ENCODE measurements at regions of chr12 and their contacts with region 1.

Region 1: DNA sequence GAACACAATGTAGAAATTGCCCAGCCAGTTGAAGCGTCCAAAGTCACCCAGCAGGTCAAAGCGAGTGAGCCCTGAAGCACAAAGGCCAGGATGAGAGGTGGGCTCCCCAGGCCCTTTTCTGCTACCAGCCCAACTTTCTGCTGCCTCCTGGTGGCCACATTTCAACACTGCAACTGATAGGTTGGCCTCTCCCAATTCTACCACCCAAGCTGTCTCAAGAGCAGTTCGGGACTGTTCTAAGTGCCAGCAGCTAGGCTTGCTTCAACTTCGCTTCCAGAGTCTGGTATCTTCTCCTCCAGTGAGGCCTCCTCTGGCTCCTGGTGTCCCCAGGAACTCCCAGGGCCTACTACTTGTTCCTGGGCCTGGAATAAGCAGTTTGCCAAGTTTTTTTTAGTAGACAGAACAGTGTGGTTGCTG is 3.4 kb upstream of the DHH start:
- DNase-seq: peak; percentile 78
- H3K4me3 ChIP-seq: no peak overlapping the region; a peak in 1 of 4 replicates
- H3K27ac ChIP-seq: no peak overlapping the region
- H3K4me1 ChIP-seq: peaks cover 0 to 13% of the 10 kb centered on the region in 2 experiments; a peak in 1 of 4 replicates
- H3K27me3 ChIP-seq: peaks cover 12% of the 10 kb centered on the region; the same call in 1 of the 2 replicates
- CTCF ChIP-seq: peak; percentile 79
- EP300 ChIP-seq: no peak
- RAD21 ChIP-seq: peak; percentile 57

Region 2: DNA sequence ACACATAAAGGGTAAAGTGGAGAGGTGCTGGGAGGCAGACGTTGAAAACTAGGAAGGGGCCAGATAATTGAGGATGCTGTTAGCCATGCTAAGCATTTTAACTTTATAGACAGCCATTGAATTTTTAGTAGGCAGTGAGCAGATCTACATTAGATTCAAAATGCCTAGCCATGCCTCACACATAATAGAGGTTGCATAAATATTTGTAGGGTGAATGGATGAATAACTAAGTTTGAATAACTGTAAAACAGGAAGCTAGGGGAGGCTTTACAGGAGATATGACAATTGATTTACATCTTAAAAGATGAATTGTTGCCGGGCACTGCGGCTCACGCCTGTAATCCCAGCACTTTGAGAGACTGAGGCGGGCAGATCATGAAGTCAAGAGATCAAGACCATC is 369.2 kb before region 1 on chr12:
- CTCF ChIA-PET with region 1: no interaction called
- POLR2A ChIA-PET with region 1: no interaction called
- DNase-seq: no peak
- H3K4me3 ChIP-seq: no peak overlapping the region
- H3K27ac ChIP-seq: no peak overlapping the region
- H3K4me1 ChIP-seq: no peaks in the 10 kb centered on the region
- H3K27me3 ChIP-seq: no peaks in the 10 kb centered on the region
- CTCF ChIP-seq: no peak
- EP300 ChIP-seq: no peak
- RAD21 ChIP-seq: no peak

Region 3: GRCh38 chr12:49043856-49044258 is 54.2 kb before region 1 on chr12:
- CTCF ChIA-PET with region 1: interaction called, 11 read pairs
- POLR2A ChIA-PET with region 1: no interaction called
- DNase-seq: peak; percentile 80
- H3K4me3 ChIP-seq: no peak overlapping the region
- H3K27ac ChIP-seq: no peak overlapping the region
- H3K4me1 ChIP-seq: no peaks in the 10 kb centered on the region
- H3K27me3 ChIP-seq: no peaks in the 10 kb centered on the region
- CTCF ChIP-seq: peak; percentile 67
- EP300 ChIP-seq: no peak
- RAD21 ChIP-seq: no peak

Region 4: GRCh38 chr12:49069507-49070346 is 28.3 kb before region 1 on chr12 and contains the start of gene RHEBL1:
- CTCF ChIA-PET with region 1: interaction called, 300 read pairs
- POLR2A ChIA-PET with region 1: interaction called, 4 read pairs
- DNase-seq: peak; percentile 97
- H3K4me3 ChIP-seq: peak within 1 kb of the TSS; percentile 70 to 99
- H3K27ac ChIP-seq: peak within 1 kb of the TSS; percentile 60 to 67
- H3K4me1 ChIP-seq: peaks cover 3 to 5% of the 10 kb centered on the region in 2 experiments; a peak in 1 of 4 replicates
- H3K27me3 ChIP-seq: no peaks in the 10 kb centered on the region
- CTCF ChIP-seq: peak; percentile 28; the same call in 1 of the 2 replicates
- EP300 ChIP-seq: no peak
- RAD21 ChIP-seq: no peak
- polyA plus RNA-seq, gene RHEBL1: 2.2 and 2.3 TPM in 2 replicates

Region 5: GRCh38 chr12:49110464-49111155 is 12.6 kb after region 1 on chr12 and contains the start of gene LMBR1L:
- CTCF ChIA-PET with region 1: interaction called, 147 read pairs
- POLR2A ChIA-PET with region 1: interaction called, 9 read pairs
- DNase-seq: peak; percentile 97
- H3K4me3 ChIP-seq: peak within 1 kb of the TSS; percentile 82 to 100
- H3K27ac ChIP-seq: peak within 1 kb of the TSS; percentile 85 to 88
- H3K4me1 ChIP-seq: peaks cover 0 to 12% of the 10 kb centered on the region in 2 experiments; a peak in 1 of 4 replicates
- H3K27me3 ChIP-seq: no peaks in the 10 kb centered on the region
- CTCF ChIP-seq: peak; percentile 46
- EP300 ChIP-seq: no peak
- RAD21 ChIP-seq: peak; percentile 12; the same call in 1 of the 2 replicates
- polyA plus RNA-seq, gene LMBR1L: 43.0 and 61.4 TPM in 2 replicates

Region 6: DNA sequence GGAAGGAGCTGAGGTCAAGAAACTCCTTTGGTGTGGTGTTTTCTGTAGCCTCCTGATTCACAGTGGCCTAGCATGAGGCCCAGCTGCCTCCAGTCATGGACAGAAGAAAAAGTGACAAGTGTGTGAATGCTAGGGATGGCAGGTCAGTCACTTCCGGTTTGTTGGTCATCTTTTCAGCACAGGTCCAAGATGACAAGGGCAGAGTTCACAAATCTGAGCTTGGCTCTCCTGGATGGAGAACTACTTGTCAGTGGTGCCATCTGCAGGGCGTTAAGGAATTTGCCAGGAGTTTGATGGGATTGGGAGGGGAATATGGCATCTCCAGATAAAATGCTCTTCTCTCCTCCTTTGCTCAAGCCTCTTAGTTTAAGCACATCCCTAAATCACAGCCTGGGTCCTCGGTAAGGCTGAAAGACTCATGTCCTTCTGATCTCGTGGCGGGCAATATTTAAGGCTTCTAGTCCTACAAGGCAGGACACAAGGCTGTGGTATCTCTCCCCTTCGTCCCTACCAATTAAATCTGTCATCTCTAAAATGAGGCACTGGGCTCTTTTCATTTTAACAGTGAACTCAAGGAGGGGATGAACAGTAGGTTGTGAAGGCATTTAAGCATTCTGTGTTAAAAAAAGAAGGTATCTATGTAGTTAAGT is 23.1 kb after region 1 on chr12:
- CTCF ChIA-PET with region 1: interaction called, 147 read pairs
- POLR2A ChIA-PET with region 1: no interaction called
- DNase-seq: peak; percentile 77
- H3K4me3 ChIP-seq: no peak overlapping the region; a peak in 1 of 4 replicates
- H3K27ac ChIP-seq: no peak overlapping the region
- H3K4me1 ChIP-seq: no peaks in the 10 kb centered on the region; a peak in 1 of 4 replicates
- H3K27me3 ChIP-seq: no peaks in the 10 kb centered on the region
- CTCF ChIP-seq: peak; percentile 72
- EP300 ChIP-seq: no peak
- RAD21 ChIP-seq: peak; percentile 85

Region 7: GRCh38 chr12:49232940-49233841 is 135.1 kb after region 1 on chr12:
- CTCF ChIA-PET with region 1: interaction called, 12 read pairs
- POLR2A ChIA-PET with region 1: no interaction called
- DNase-seq: peak; percentile 64
- H3K4me3 ChIP-seq: peak overlapping the region in 1 of 2 experiments; percentile 41; a peak in 2 of 4 replicates
- H3K27ac ChIP-seq: peak overlapping the region; percentile 79 to 90
- H3K4me1 ChIP-seq: peaks cover 23 to 25% of the 10 kb centered on the region in 2 experiments
- H3K27me3 ChIP-seq: no peaks in the 10 kb centered on the region
- CTCF ChIP-seq: peak; percentile 41
- EP300 ChIP-seq: peak in 1 of 2 experiments; percentile 44; a peak in 1 of 4 replicates
- RAD21 ChIP-seq: no peak

Region 8: DNA sequence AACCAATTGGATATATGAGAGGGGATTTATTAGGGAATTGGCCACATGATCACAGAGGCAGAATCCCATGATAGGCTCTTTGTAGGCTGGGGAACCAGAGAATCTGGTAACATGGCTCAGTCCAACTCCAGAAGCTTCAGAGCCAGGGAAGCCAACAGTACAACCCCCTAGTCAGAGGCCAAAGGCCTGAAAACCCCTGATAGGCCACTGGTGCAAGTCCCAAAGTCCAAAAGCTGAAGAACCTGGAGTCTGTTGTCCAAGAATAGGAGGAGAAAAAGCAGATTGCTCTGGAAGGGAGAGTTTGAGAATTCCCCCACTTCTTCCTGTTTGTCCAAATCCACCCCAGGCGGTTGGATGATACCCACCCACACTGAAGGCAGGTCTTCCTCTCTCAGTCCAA is 216.8 kb after region 1 on chr12:
- CTCF ChIA-PET with region 1: no interaction called
- POLR2A ChIA-PET with region 1: no interaction called
- DNase-seq: no peak
- H3K4me3 ChIP-seq: no peak overlapping the region
- H3K27ac ChIP-seq: no peak overlapping the region
- H3K4me1 ChIP-seq: no peaks in the 10 kb centered on the region
- H3K27me3 ChIP-seq: no peaks in the 10 kb centered on the region
- CTCF ChIP-seq: no peak
- EP300 ChIP-seq: no peak
- RAD21 ChIP-seq: no peak

Region 9: DNA sequence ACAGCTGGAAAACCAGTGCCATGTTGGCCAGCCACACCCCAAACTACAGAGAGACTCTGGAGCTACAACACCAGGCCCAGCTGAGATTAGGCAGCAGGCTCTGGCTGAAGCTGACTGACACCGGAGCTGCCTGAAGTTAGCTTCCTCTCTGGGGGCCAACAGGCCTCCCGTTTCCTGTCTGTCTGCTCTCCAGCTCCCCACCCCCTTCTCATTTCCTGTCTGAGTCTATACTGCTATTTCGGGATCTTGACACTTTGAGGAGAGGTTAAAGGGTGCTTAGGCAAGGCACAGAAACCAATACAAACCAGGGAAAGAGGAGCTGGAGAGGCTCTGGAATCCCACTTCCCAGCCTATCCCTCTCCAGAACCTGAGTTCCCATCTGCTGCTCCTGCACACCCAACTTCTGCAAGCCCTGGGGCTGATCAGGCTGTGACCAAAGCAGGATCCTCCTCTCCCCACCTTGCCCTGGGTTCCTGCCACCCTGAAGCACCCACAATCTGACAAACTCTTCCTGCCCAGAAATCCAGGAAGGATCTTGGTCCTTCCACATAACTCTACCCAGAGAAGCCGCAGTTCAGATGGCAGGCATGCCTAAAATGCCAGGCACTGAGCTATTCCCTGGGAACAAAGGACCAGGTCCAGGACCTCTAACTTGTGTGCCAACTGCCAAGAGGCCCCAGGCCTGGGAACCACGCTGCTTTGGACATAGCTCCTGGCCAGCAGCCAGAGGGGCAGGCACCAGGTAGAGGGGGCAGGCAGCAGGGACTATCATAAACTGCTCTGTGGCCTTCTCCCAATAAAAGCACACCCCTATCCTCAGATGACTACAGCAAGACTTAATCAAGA is 565.2 kb after region 1 on chr12:
- CTCF ChIA-PET with region 1: no interaction called
- POLR2A ChIA-PET with region 1: no interaction called
- DNase-seq: peak; percentile 50
- H3K4me3 ChIP-seq: no peak overlapping the region; a peak in 1 of 4 replicates
- H3K27ac ChIP-seq: peak overlapping the region; percentile 89 to 91
- H3K4me1 ChIP-seq: peaks cover 20 to 29% of the 10 kb centered on the region in 2 experiments; a peak in 3 of 4 replicates
- H3K27me3 ChIP-seq: no peaks in the 10 kb centered on the region
- CTCF ChIP-seq: no peak
- EP300 ChIP-seq: peak in 1 of 2 experiments; percentile 61; a peak in 1 of 4 replicates
- RAD21 ChIP-seq: no peak

Measured in SK-N-SH (cell line).